GM13976 (cell line): ENCODE measurements at regions of chr21 and their contacts with region 1.

Region 1: DNA sequence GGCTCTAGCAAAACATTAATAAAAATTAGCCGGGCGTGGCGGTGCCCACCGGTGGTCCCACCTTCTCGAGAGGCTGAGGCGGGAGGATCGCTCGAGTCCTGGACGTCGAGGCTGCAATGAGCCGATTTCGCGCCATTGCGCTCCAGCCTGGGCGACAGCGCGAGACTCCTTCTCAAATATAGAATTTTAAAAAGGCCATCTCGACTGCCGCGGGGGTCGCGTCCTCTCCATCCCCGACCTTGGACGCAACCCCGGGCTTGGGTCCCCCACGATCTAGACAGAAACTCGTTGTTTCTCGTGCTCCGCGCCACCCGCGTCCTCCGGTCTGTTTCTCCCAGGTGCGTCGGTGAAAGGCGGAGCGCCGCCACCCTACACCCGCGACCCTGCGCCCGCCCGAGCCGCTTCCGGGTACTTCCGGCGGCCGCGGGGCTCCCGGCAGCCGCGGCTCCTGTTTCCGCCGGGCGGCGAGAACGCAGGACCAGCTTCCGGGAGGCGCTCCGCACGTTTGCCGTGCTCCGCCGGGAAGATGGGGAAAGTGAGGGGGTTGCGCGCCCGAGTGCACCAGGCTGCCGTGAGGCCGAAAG is at the start of gene SLX9:
- DNase-seq: peak; percentile 95
- CTCF ChIP-seq: no peak

Region 2: GRCh38 chr21:44897326-44898010 is 42.2 kb before region 1 on chr21:
- in situ Hi-C with region 1: loop called (anchors 5 kb)
- DNase-seq: no peak
- CTCF ChIP-seq: no peak

Region 3: GRCh38 chr21:45167796-45168222 is 228.2 kb after region 1 on chr21:
- in situ Hi-C with region 1: no loop called
- DNase-seq: no peak
- CTCF ChIP-seq: no peak